ENCODE measurements at regions of chr22 and their contacts with region 1.

Region 1: GRCh38 chr22:50030297-50031188 is 18.0 kb upstream of the IL17REL start:
- DNase-seq: peak; percentile 88
- ATAC-seq: peak; percentile 92 to 94
- H3K4me3 ChIP-seq: no peak overlapping the region
- H3K27ac ChIP-seq: no peak overlapping the region
- H3K4me1 ChIP-seq: peaks cover 5% of the 10 kb centered on the region
- H3K27me3 ChIP-seq: peaks cover 28% of the 10 kb centered on the region
- CTCF ChIP-seq: peak; percentile 92

Region 2: DNA sequence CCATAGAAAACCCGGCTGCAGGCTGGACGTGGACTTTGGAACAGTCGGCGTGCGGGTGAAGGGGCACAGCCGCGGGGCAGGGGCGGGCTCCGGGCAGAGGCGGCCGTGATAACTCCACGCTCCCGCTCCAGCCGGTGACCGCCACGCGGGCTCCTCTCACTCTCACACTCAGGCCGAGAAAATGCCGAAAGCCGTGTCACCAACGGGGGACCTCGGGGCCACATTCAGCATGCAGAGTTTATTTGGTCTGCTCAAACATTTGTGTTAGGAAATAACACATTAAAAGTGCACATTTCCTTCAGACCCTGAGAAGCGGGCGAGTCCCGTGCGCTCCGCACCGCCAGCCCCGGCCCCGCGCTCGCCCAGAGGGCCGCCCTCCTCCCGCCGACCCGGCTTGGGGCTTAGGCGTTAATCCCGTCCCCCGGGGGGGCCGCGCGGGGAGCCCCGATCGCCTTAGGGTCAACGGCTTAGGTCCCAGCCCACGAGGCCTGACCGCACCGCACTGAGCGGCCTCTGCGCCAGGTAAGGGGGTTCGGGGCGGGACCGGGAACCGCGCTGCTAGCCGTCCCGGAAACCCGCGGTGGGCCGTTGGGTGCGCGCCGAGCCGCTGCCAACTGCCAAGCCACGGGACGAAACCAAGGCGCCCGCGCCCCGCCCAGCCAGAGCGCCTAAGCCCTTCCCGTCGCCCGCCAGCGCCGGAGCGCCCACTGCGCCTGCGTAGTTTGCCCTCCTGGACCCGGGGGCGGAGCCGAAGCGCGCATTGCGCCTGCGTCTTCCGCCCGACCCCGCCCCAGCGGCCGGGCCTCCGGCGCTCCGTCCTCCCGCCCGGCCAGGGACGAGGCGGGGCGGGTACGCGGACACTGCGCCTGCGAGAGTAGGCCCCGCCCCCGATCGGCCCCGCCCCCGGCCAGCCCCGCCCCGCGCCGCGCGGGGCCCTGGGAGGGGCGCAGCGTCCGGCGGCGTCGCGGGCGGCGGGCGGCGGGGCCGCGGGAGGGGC is 177.3 kb before region 1 on chr22 and contains the start of gene ZBED4:
- intact Hi-C with region 1: no loop called
- DNase-seq: peak; percentile 99
- ATAC-seq: peak; percentile 96 to 97
- H3K4me3 ChIP-seq: peak within 1 kb of the TSS; percentile 77
- H3K27ac ChIP-seq: peak within 1 kb of the TSS; percentile 96
- H3K4me1 ChIP-seq: peaks cover 45% of the 10 kb centered on the region
- H3K27me3 ChIP-seq: peaks cover 27% of the 10 kb centered on the region
- CTCF ChIP-seq: no peak
- total RNA-seq, gene ZBED4: 12.7 TPM

Region 3: DNA sequence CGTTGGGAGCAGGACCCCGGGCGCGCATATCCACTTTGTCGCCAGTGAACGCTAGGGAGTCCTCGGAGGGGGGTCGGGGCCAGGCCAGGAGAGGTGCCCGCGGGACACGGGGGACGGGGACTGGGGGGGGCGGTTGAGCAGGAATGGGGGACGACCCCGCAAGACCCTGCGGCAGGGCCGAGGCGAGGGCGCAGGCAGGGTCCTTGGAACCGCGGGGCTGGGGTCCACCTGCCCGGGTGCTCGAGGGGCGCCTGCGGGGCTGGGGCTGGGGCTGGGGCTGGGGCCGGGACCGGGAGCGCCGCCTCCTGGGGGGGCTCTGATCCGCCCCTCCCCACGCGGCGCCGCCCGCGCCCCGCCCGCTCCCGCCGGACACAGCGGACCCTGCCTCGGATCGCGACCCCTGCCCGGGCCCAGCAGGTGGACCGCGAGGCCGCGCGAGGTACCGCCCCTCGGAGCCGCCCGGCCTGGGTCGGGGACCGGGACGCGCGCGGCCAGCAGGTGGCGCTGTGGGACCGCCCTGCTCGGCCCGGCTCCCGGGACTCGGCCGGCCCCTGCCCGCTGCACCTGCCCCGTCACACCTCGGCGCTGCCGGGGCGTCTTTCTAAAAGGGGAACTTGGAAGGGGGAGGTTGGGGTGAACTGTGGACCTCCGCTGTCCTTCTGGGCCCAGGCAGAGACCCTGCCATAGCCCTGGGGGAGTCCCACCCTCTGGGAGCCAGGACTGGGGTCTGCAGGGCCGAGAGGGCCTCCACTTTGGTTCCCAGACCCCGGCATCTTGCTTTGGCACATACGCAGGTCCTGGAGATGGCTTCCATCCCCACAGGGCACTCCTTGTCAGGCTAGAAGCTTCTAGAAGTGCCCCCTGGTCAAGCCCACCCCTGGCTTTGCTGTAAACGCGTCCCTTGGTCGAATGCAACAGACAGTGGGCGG is 101.1 kb before region 1 on chr22:
- intact Hi-C with region 1: loop called (anchors 10 kb)
- DNase-seq: peak; percentile 80
- ATAC-seq: peak; percentile 74 to 80
- H3K4me3 ChIP-seq: no peak overlapping the region
- H3K27ac ChIP-seq: no peak overlapping the region
- H3K4me1 ChIP-seq: peaks cover 49% of the 10 kb centered on the region
- H3K27me3 ChIP-seq: peaks cover 8% of the 10 kb centered on the region
- CTCF ChIP-seq: peak; percentile 84

Region 4: DNA sequence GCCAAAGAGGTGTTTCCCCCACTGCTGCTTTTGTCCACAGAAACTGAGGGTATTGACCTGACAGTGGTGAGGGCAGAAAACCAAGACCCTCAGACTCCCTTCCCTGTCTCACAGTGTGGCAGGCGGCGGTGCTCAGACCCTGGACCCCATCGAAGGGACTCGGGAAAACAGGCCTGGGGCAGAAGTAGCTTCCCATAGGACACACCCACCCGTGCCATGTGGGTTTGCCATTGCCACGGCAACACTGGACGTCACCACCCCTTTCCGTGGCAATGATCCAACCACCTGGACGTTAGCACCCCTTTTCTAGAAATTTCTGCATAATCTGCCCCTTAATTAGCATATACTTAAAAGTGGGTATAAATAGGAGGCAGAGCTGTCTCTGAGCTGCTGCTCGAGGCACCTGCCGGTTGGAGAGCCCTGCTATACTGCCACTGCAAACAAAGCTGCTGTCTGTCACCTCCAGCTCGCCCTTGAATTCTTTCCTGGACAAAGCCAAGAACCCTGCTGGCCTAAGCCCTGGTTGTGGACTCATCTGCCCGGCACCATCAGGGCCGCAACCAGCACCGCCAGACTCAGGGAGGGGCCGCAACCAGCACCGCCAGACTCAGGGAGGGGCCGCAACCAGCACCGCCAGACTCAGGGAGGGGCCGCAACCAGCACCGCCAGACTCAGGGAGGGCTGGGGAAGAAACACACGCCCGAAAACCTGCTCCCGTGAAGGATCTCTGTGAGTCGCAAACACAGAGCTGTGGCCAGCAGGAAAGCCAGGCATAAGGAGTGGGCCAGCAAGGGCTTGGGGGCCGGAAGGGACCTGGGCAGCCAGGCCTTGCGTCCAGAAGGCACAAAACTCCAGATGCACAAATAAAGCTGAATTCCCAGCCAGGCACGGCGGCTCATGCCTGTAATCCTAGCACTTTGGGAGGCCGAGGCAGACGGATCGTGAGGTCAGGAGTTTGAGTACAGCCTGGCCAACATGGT is 44.3 kb after region 1 on chr22:
- intact Hi-C with region 1: no loop called
- DNase-seq: no peak
- ATAC-seq: no peak
- H3K4me3 ChIP-seq: no peak overlapping the region
- H3K27ac ChIP-seq: no peak overlapping the region
- H3K4me1 ChIP-seq: no peaks in the 10 kb centered on the region
- H3K27me3 ChIP-seq: no peaks in the 10 kb centered on the region
- CTCF ChIP-seq: no peak

Region 5: GRCh38 chr22:50169181-50169759 is 138.7 kb after region 1 on chr22:
- intact Hi-C with region 1: no loop called
- DNase-seq: no peak
- ATAC-seq: no peak
- H3K4me3 ChIP-seq: peak overlapping the region; percentile 44
- H3K27ac ChIP-seq: no peak overlapping the region
- H3K4me1 ChIP-seq: no peaks in the 10 kb centered on the region
- H3K27me3 ChIP-seq: peaks cover 25% of the 10 kb centered on the region
- CTCF ChIP-seq: no peak